ENCODE measurements at regions of chr4 and their contacts with region 1.

Region 1: GRCh38 chr4:56424697-56425514 is 10.5 kb downstream of the PPAT start:
- DNase-seq: peak; percentile 32
- H3K4me3 ChIP-seq: no peak overlapping the region
- H3K27ac ChIP-seq: no peak overlapping the region
- H3K4me1 ChIP-seq: no peaks in the 10 kb centered on the region
- H3K27me3 ChIP-seq: no peaks in the 10 kb centered on the region
- CTCF ChIP-seq: peak in 3 of 4 experiments; percentile 64 to 68 (median 64)
- POLR2A ChIP-seq: no peak

Region 2: DNA sequence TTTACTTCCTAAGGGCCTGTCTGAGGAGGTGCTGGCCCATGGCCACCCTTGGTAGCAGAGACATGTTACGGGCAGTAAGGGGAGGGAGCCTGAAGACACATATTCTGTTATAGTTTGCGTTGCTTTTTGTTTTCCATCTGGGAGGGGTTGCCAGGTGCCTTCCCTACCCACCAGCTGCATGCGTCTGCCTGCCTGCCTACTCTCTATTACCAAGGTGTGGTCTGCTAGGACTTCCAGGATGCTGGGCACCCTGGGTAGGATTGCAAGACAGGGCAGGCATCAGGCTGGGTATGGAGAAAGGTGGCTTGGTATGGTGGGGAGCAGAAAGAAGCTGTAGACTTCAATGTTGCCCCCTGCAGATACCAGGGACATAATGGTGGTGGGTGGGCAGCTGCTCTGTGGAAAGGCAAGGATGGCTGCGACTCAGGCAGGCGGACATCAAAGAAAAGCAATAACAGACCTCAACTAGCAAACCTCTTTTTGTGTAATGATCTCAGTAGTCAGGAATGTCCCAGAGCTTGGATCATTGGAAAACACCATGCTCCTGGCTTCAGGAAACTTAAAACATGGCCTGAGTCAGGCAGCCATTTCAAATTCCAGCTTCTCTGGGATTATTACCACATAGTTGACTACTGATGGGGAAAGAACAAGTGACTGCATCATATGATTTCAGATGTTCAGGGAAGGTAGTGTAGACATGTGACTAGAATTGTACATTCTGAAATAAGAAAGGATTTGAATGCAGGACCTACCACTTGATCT is 188.4 kb after region 1 on chr4:
- intact Hi-C with region 1: no loop called
- DNase-seq: peak; percentile 26
- H3K4me3 ChIP-seq: no peak overlapping the region
- H3K27ac ChIP-seq: no peak overlapping the region
- H3K4me1 ChIP-seq: no peaks in the 10 kb centered on the region
- H3K27me3 ChIP-seq: no peaks in the 10 kb centered on the region
- CTCF ChIP-seq: no peak
- POLR2A ChIP-seq: no peak

Region 3: GRCh38 chr4:56828784-56829535 is 404.1 kb after region 1 on chr4:
- intact Hi-C with region 1: loop called (anchors 10 kb)
- DNase-seq: no peak
- H3K4me3 ChIP-seq: no peak overlapping the region
- H3K27ac ChIP-seq: no peak overlapping the region
- H3K4me1 ChIP-seq: no peaks in the 10 kb centered on the region
- H3K27me3 ChIP-seq: no peaks in the 10 kb centered on the region
- CTCF ChIP-seq: no peak
- POLR2A ChIP-seq: no peak